Dendritic cell treated with granulocyte-macrophage colony-stimulating factor and Interleukin-4, amounts not matched to agents 40 ng/mL and 50 ng/mL, for 4 days (primary cell): ENCODE measurements at regions of chr16 and their contacts with region 1.

Region 1: DNA sequence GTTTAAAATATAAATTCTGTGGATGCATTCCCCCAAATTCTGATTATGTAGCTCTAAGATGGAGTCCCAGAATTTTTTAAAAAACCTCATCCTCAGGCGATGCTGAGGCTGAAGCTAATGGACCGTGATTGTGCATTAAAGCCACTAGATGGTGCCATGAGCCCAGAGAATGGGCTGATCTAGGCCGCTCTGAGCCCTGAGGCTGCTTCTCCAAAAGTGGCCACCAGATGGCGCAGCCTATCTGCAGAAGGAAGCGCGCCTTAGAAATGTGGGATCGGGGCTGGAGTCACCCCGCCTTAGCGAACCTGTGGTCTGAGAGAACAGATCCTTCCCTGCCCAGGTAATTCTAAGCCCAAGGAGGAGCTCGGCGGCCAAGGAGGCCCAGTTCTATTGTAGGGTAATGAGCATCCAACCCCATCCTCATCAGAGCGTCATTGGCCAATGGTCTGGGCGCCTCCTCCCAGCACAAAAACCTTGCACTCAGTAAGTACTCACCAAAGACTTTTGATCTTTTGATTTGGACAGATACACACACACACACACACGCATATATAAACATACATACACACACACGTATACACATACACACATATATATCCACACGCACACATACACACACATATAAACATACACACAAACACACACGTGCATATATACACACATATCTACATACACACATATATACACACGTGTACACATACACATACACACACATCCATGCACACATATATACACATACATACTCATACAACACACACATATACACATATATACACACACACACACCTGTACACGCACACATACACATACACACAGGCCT is 13.7 kb upstream of the MMP2 start:
- H3K4me3 Mint-ChIP-seq: no peak overlapping the region
- H3K27ac Mint-ChIP-seq: no peak overlapping the region
- H3K4me1 Mint-ChIP-seq: peaks cover 5% of the 10 kb centered on the region
- H3K27me3 Mint-ChIP-seq: peaks cover 3% of the 10 kb centered on the region

Region 2: GRCh38 chr16:55494994-55495421 is 29.7 kb after region 1 on chr16:
- intact Hi-C with region 1: loop called (anchors 2 kb)
- H3K4me3 Mint-ChIP-seq: no peak overlapping the region
- H3K27ac Mint-ChIP-seq: no peak overlapping the region
- H3K4me1 Mint-ChIP-seq: peaks cover 27% of the 10 kb centered on the region
- H3K27me3 Mint-ChIP-seq: peaks cover 7% of the 10 kb centered on the region

Region 3: GRCh38 chr16:55543472-55543871 is 78.2 kb after region 1 on chr16:
- intact Hi-C with region 1: loop called (anchors 1 kb)
- H3K4me3 Mint-ChIP-seq: no peak overlapping the region
- H3K27ac Mint-ChIP-seq: no peak overlapping the region
- H3K4me1 Mint-ChIP-seq: peaks cover 9% of the 10 kb centered on the region
- H3K27me3 Mint-ChIP-seq: no peaks in the 10 kb centered on the region

Region 4: DNA sequence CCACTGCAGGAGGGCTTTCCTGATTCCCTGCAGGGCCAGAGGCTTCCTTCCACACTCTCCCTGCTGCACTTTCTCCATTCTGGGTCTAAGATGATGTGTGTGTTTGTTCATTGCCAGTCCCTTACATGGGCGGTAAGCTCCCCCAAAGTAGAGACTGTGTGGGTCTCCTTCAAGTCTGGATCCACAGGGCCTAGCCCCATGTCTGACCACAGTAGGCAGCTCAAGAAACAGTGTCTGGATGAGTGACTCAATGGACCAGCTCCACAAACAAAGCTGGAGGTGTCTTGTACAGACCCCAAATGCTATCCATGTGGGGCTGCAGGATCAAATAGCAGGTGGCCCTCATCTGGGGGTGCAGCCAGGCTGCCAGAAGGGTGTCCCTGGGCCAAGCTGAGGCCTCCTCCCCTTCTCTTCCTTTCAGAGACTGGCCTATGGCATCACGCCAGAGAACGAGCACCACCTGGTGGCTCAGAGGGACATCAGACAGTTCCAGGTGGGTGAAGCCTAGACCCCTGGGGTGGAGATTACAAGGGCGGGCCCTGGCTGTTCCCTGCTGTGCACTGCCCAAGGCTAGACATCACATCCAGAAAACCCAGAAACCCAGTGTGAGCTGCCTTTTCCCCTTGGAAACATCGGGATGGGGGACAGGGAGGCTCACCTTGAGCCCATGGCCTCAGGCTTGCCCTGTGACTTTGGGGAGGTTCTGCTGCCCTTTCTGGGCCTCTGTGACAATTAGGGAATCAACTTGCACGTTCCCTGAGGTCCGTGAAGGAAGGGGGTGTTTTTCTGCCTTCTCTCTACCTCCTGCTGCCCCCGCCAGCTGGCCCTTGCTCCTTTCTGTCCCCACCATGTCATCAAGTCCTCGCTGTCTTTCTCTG is 236.4 kb after region 1 on chr16:
- intact Hi-C with region 1: loop called (anchors 1 kb)
- H3K4me3 Mint-ChIP-seq: no peak overlapping the region
- H3K27ac Mint-ChIP-seq: no peak overlapping the region
- H3K4me1 Mint-ChIP-seq: no peaks in the 10 kb centered on the region
- H3K27me3 Mint-ChIP-seq: peaks cover 12% of the 10 kb centered on the region

Region 5: GRCh38 chr16:55842369-55843104 is 377.2 kb after region 1 on chr16:
- intact Hi-C with region 1: loop called (anchors 5 kb)
- H3K4me3 Mint-ChIP-seq: no peak overlapping the region
- H3K27ac Mint-ChIP-seq: no peak overlapping the region
- H3K4me1 Mint-ChIP-seq: peaks cover 25% of the 10 kb centered on the region
- H3K27me3 Mint-ChIP-seq: peaks cover 12% of the 10 kb centered on the region